ENCODE measurements at regions of chr19 and their contacts with region 1.

Region 1: DNA sequence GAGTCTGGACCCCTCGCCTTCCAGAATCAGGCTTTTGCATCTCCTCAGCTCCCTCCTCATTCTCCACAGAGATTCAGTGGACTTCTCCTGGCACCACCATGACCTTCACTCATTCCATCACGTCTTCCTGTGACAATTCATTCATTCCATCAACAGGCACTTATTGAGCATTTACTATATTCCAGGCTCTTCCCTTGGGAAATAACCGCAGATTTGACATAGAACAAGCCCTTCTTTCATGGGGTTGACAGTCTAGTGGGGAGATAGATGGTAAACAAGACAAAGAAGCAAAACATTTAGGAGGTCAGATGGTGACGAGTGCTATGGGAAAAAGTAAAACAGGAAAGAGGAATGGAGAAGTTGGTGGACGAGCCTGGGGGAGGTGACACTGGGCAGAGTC is 2.6 kb upstream of the SULT2B1 start:
- DNase-seq: no peak
- ATAC-seq: no peak
- H3K4me3 ChIP-seq: no peak overlapping the region
- H3K4me3 Mint-ChIP-seq: no peak overlapping the region
- H3K27ac ChIP-seq: no peak overlapping the region
- H3K27ac Mint-ChIP-seq: no peak overlapping the region
- H3K4me1 ChIP-seq: no peaks in the 10 kb centered on the region
- H3K4me1 Mint-ChIP-seq: no peaks in the 10 kb centered on the region
- H3K27me3 ChIP-seq: peaks cover 0 to 2% of the 10 kb centered on the region in 2 experiments
- H3K27me3 Mint-ChIP-seq: peaks cover 6% of the 10 kb centered on the region
- CTCF ChIP-seq: no peak

Region 2: GRCh38 chr19:48524728-48525127 is 24.7 kb before region 1 on chr19:
- CTCF ChIA-PET with region 1: no interaction called
- POLR2A ChIA-PET with region 1: no interaction called
- intact Hi-C with region 1: loop called in 1 of 2 experiments (anchors 1 kb)
- DNase-seq: no peak
- ATAC-seq: no peak
- H3K4me3 ChIP-seq: no peak overlapping the region
- H3K4me3 Mint-ChIP-seq: no peak overlapping the region
- H3K27ac ChIP-seq: no peak overlapping the region
- H3K27ac Mint-ChIP-seq: no peak overlapping the region
- H3K4me1 ChIP-seq: no peaks in the 10 kb centered on the region
- H3K4me1 Mint-ChIP-seq: no peaks in the 10 kb centered on the region
- H3K27me3 ChIP-seq: peaks cover 0 to 4% of the 10 kb centered on the region in 2 experiments
- H3K27me3 Mint-ChIP-seq: peaks cover 5% of the 10 kb centered on the region
- CTCF ChIP-seq: no peak

Region 3: DNA sequence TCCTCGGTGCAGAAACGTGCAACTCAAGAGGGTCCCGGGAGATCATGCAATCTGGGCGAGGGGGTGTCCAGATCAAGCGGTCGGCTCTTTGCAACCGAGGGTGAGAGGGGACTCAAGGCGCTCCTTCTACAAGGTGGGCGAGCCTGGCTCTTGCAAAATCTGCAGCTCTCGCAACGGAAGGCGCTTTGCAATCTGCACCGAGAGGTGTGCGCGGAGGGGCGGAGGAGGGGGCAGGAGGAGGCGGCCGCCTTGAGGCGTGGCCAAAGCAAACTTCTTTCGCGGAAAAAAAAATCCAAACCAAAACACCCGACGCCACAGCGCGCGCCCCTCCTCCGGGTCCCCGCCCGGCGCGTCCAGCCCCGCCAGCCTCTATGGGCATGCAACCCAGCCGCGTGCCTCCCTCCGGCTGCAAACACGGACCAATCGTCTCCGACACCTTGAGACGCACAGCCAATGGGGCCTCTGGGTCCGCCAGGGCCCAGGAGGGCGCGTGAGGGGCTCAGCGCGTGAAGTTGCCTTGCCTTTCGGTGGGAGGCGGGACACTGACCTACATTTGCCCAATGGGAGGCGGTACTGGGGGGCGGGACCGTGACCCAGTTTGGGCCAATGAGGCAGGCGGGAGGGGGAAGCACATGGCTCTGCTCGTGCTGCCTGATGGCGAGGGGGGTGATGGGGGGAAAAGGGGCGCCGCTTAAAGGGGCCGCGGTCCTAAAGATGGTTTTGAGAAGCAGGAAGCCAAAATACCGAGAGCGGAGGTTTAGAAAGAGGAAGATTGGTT is 88.0 kb after region 1 on chr19 and contains the start of gene DBP:
- CTCF ChIA-PET with region 1: no interaction called
- POLR2A ChIA-PET with region 1: no interaction called
- intact Hi-C with region 1: no loop called
- DNase-seq: peak; percentile 99 to 100 (median 100)
- ATAC-seq: peak; percentile 69
- H3K4me3 ChIP-seq: peak within 1 kb of the TSS; percentile 71
- H3K4me3 Mint-ChIP-seq: peak within 1 kb of the TSS; percentile 94
- H3K27ac ChIP-seq: peak within 1 kb of the TSS; percentile 86 to 94
- H3K27ac Mint-ChIP-seq: peak within 1 kb of the TSS; percentile 97
- H3K4me1 ChIP-seq: peaks cover 59% of the 10 kb centered on the region
- H3K4me1 Mint-ChIP-seq: peaks cover 50% of the 10 kb centered on the region
- H3K27me3 ChIP-seq: no peaks in the 10 kb centered on the region
- H3K27me3 Mint-ChIP-seq: no peaks in the 10 kb centered on the region
- CTCF ChIP-seq: no peak
- total RNA-seq, gene DBP: 48.3 to 55.6 TPM

Region 4: GRCh38 chr19:49097455-49098288 is 548.3 kb after region 1 on chr19:
- CTCF ChIA-PET with region 1: no interaction called
- POLR2A ChIA-PET with region 1: no interaction called
- intact Hi-C with region 1: no loop called
- DNase-seq: peak; percentile 61 to 87 (median 68)
- ATAC-seq: peak; percentile 93
- H3K4me3 ChIP-seq: no peak overlapping the region
- H3K4me3 Mint-ChIP-seq: no peak overlapping the region
- H3K27ac ChIP-seq: no peak overlapping the region
- H3K27ac Mint-ChIP-seq: peak overlapping the region; percentile 30
- H3K4me1 ChIP-seq: peaks cover 14% of the 10 kb centered on the region
- H3K4me1 Mint-ChIP-seq: peaks cover 21% of the 10 kb centered on the region
- H3K27me3 ChIP-seq: no peaks in the 10 kb centered on the region
- H3K27me3 Mint-ChIP-seq: no peaks in the 10 kb centered on the region
- CTCF ChIP-seq: peak; percentile 96